Mucosa of descending colon (tissue), 3 donors: ENCODE measurements at regions of chr10 and their contacts with region 1.

Region 1: DNA sequence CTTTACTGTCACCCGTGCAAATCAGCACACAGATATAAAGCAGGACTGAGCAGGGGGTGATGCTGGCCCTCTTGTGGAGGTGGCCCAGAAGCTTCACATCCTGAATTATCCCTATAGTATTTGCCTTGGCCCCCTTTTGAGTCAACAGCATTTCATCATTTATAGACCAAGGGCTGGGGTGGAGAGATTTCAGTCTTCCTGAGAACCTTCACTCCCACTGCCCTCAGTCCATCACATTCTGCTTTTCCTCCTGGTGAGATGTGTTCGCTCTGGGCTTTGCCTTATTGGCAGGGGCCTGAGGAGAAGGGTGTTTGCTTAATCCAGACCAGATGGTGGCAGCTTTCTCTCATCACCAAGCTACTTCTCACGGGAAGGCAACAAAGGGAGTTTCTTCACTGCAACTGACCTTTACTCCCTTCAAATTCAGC is 47.7 kb downstream of the NOC3L start:
- DNase-seq: no peak
- ATAC-seq: no peak
- H3K4me3 ChIP-seq: no peak overlapping the region
- H3K4me1 ChIP-seq: no peaks in the 10 kb centered on the region
- CTCF ChIP-seq: no peak

Region 2: GRCh38 chr10:94083662-94084265 is 231.3 kb before region 1 on chr10:
- intact Hi-C with region 1: loop called in 1 of 2 experiments (anchors 5 kb)
- DNase-seq: no peak
- ATAC-seq: peak; percentile 74
- H3K4me3 ChIP-seq: no peak overlapping the region
- H3K4me1 ChIP-seq: peaks cover 6% of the 10 kb centered on the region
- CTCF ChIP-seq: no peak

Region 3: GRCh38 chr10:94361171-94361794 is 46.2 kb after region 1 on chr10:
- intact Hi-C with region 1: no loop called
- DNase-seq: peak in 1 of 3 donors; percentile 60
- ATAC-seq: no peak
- H3K4me3 ChIP-seq: no peak overlapping the region
- H3K4me1 ChIP-seq: peaks cover 9% of the 10 kb centered on the region
- CTCF ChIP-seq: no peak